HEK293 (cell line): ENCODE measurements at regions of chr20 and their contacts with region 1.

Region 1: GRCh38 chr20:63955827-63956663 is at the start of gene UCKL1:
- H3K4me3 ChIP-seq: peak within 1 kb of the TSS; percentile 99
- H3K27ac ChIP-seq: peak within 1 kb of the TSS; percentile 94
- H3K4me1 ChIP-seq: peaks cover 4% of the 10 kb centered on the region; the same call in 1 of the 2 replicates
- CTCF ChIP-seq: peak; percentile 15

Region 2: DNA sequence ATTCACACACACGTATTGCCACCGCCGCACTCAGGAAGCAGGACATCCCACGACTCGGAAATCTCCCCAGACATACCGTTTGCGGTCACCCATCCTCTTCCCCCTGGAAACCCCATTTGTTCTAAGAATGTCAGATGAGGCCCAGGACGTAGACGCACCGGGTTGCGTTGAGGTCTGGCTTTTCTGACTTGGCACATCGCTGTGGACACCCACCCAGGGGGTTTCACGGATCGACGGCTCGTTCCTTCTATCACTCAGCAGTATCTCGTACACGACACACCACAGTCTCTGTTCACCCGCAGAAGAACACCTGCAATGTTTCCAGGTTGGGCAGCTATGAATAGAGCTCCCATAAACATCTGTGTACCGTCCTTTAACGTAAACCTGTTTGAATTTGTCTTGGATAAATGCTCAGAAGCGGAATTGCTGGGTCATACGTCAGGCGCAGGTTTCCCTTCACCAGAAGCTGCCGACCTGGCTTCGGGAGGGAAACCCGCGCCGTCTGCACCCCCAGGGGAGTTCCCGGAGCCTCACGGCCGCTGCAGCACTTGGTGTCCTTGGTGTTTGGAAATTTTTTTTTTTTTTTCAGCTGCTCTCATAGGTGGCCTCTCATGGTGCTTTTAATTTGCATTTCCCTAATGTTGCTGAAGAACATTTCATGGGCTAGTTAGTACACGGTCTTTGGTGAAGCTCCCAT is 447.8 kb before region 1 on chr20:
- CTCF ChIA-PET with region 1: no interaction called
- POLR2A ChIA-PET with region 1: no interaction called
- H3K4me3 ChIP-seq: no peak overlapping the region
- H3K27ac ChIP-seq: no peak overlapping the region
- H3K4me1 ChIP-seq: no peaks in the 10 kb centered on the region
- CTCF ChIP-seq: no peak

Region 3: DNA sequence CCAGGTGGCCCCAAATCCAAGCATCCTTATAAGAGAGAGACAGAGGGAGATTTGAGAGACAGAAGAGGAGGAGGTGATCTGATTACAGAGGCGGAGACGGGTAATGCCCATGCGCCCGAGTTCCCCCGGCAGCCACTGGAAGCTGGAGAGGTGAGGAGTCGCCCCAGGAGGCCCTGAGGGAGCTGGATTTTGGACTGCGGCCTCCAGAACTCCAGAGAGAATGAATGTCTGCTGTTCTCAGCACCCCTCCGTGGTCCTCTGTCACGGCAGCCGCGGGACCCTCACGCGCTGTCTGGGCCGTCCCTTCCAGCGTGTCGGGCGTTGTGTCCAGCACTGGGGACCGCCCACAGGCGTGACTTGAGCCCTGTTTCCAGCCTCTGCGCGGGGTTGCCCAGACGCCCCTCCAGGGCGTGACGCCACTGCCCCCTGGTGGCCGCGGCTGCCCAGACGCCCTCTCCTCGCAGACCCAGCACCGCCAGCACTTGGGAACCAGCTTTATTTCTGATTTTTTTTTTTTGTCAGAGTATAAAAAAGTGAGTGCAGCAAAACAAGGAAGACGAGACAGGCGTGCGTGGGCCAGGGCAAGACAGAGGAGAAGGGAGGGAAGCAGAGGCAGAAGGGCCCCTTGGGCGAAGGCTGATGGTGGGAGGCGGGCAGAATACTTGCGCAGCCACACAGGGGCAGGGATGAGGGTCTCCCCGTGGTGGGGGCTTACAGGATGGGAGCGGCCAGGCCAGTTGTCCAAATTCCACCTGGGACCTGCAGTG is 17.8 kb after region 1 on chr20:
- CTCF ChIA-PET with region 1: interaction called, 5 read pairs
- POLR2A ChIA-PET with region 1: interaction called, 12 read pairs
- H3K4me3 ChIP-seq: no peak overlapping the region; the same call in 1 of the 2 replicates
- H3K27ac ChIP-seq: no peak overlapping the region
- H3K4me1 ChIP-seq: 0 out of 2 replicates have a peak, but pooled peaks cover 3% of the 10 kb centered on the region
- CTCF ChIP-seq: peak; percentile 97

Region 4: DNA sequence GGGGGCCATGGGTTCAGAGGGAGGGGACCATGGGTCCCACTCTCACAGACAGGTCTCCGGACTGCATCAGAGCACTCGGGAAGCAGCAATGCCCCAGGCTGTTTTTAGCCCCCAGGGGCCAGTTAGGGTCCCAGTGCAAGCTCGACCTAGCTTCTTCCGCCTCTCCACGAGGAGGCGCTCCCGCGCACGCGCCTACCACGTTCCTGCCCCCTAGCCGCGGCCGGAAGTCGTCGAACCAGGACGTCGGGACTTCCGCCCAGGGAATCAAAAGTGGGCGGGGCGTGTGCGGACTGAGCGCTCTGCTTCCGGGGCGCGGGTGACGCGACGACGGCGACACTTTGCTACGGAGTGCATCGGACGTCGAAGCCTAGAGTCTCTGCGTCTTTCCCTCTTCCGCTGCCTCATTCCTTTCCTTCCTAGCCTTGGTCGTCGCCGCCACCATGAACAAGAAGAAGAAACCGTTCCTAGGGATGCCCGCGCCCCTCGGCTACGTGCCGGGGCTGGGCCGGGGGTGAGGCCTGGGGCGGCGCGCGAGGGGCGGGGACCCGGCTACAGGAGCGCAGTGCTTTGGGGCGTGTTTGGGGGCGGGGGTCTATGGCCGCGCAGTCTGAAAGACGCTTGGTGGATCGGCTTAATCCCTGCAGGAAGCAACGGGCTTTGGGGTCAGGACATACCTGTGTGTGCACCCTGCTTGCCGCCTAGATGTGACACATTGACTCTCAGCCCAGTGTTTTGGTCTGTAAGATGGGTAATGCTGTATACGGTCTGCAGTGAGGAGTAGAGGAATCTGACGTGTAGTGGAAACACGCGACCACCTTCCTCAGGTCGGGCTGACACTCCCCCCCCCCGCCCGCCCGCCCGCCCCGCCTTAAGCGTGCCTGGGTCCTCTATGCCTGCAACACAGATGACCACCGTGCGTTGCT is 25.0 kb after region 1 on chr20 and contains the start of gene PRPF6:
- CTCF ChIA-PET with region 1: interaction called, 5 read pairs
- POLR2A ChIA-PET with region 1: interaction called, 21 read pairs
- H3K4me3 ChIP-seq: peak within 1 kb of the TSS; percentile 95
- H3K27ac ChIP-seq: peak within 1 kb of the TSS; percentile 78
- H3K4me1 ChIP-seq: peaks cover 13% of the 10 kb centered on the region
- CTCF ChIP-seq: peak; percentile 100